ENCODE measurements at regions of chr15 and their contacts with region 1.

Region 1: DNA sequence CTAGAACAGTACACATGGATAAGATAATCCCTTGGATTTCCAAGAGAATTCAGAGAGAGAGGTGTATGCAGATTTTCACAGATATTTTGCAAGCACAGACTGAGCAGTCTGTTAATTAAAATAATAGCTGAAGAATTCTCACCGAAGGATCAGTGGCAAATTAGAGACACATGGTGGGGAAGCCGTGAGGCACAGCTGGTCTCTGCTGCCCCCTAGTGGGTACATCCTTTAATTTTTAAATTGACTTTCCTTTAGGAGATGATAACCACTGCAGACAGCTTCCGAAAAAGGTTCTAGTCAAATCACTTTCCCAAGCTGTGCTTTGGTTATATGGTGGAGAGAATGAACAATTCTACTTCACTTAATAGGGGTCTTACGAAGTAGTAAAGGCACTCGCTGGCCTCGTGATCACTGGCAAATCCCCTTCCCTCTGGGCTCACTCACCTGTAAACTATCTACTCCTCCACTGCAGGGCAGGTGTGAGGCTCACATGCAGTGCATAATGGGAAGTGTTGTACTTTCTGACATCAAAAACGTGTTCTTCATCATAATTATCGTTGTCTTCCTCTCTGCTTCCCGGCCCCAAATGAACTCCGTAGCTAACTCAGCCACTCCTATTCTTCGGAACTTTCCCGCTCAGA is 19.5 kb downstream of the MESD start:
- DNase-seq: peak; percentile 39
- ATAC-seq: peak; percentile 88
- H3K4me3 ChIP-seq: no peak overlapping the region
- H3K27ac ChIP-seq: no peak overlapping the region
- H3K4me1 ChIP-seq: peaks cover 6 to 10% of the 10 kb centered on the region in 2 experiments; a peak in 3 of 4 replicates
- H3K27me3 ChIP-seq: no peaks in the 10 kb centered on the region
- CTCF ChIP-seq: peak; percentile 65 to 89 (median 84)
- POLR2A ChIP-seq: no peak
- RAD21 ChIP-seq: peak; percentile 95

Region 2: GRCh38 chr15:80455668-80456442 is 514.3 kb before region 1 on chr15:
- CTCF ChIA-PET with region 1: interaction called, 6 read pairs
- POLR2A ChIA-PET with region 1: no interaction called
- RAD21 ChIA-PET with region 1: no interaction called
- intact Hi-C with region 1: loop called (anchors 2 kb)
- DNase-seq: peak; percentile 44
- ATAC-seq: peak; percentile 89
- H3K4me3 ChIP-seq: no peak overlapping the region
- H3K27ac ChIP-seq: no peak overlapping the region
- H3K4me1 ChIP-seq: peaks cover 4 to 8% of the 10 kb centered on the region in 2 experiments; a peak in 3 of 4 replicates
- H3K27me3 ChIP-seq: no peaks in the 10 kb centered on the region
- CTCF ChIP-seq: peak; percentile 88 to 95 (median 89)
- POLR2A ChIP-seq: no peak
- RAD21 ChIP-seq: peak; percentile 94

Region 3: DNA sequence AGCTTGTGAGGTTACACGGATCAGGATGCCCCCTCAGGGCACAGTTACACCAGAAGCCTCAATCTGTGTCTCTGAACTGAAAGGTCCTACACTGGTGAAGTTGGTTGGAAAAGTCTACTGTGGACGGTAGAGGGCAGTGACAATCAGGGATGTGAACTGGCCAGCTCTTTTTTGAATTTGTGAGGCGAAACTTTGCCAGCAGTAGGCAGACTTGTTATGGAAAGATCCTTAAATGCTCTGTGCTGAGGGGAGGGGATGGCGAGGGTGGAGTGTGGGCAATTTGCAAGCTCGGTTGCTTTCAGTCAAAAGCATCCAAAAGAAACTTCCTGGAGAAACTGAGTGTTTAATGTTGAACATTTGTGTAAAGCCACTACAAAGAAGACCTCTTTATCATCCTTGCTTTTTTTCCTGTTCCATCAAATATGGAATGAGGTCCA is 402.4 kb before region 1 on chr15:
- CTCF ChIA-PET with region 1: interaction called, 12 read pairs
- POLR2A ChIA-PET with region 1: no interaction called
- RAD21 ChIA-PET with region 1: interaction called, 3 to 7 read pairs
- intact Hi-C with region 1: loop called (anchors 1 kb)
- DNase-seq: peak; percentile 72
- ATAC-seq: peak; percentile 97
- H3K4me3 ChIP-seq: no peak overlapping the region
- H3K27ac ChIP-seq: no peak overlapping the region
- H3K4me1 ChIP-seq: no peaks in the 10 kb centered on the region
- H3K27me3 ChIP-seq: no peaks in the 10 kb centered on the region
- CTCF ChIP-seq: peak; percentile 75 to 99 (median 88)
- POLR2A ChIP-seq: no peak
- RAD21 ChIP-seq: peak; percentile 96

Region 4: GRCh38 chr15:80695104-80695910 is 274.8 kb before region 1 on chr15 and contains the start of gene ABHD17C:
- CTCF ChIA-PET with region 1: no interaction called
- POLR2A ChIA-PET with region 1: no interaction called
- RAD21 ChIA-PET with region 1: interaction called in 1 of 2 experiments, 3 read pairs
- intact Hi-C with region 1: loop called (anchors 5 kb)
- DNase-seq: no peak
- ATAC-seq: peak; percentile 80
- H3K4me3 ChIP-seq: peak within 1 kb of the TSS; percentile 79 to 81
- H3K27ac ChIP-seq: peak within 1 kb of the TSS; percentile 81
- H3K4me1 ChIP-seq: peaks cover 5 to 20% of the 10 kb centered on the region in 2 experiments; a peak in 3 of 4 replicates
- H3K27me3 ChIP-seq: no peaks in the 10 kb centered on the region
- CTCF ChIP-seq: no peak
- POLR2A ChIP-seq: no peak
- RAD21 ChIP-seq: no peak
- total RNA-seq, gene ABHD17C: 27.9 TPM

Region 5: GRCh38 chr15:80787316-80787715 is 182.8 kb before region 1 on chr15:
- CTCF ChIA-PET with region 1: interaction called, 4 read pairs
- POLR2A ChIA-PET with region 1: no interaction called
- RAD21 ChIA-PET with region 1: no interaction called
- intact Hi-C with region 1: loop called (anchors 1 kb)
- DNase-seq: no peak
- ATAC-seq: no peak
- H3K4me3 ChIP-seq: no peak overlapping the region
- H3K27ac ChIP-seq: no peak overlapping the region
- H3K4me1 ChIP-seq: no peaks in the 10 kb centered on the region
- H3K27me3 ChIP-seq: no peaks in the 10 kb centered on the region
- CTCF ChIP-seq: no peak
- POLR2A ChIP-seq: no peak
- RAD21 ChIP-seq: no peak

Region 6: DNA sequence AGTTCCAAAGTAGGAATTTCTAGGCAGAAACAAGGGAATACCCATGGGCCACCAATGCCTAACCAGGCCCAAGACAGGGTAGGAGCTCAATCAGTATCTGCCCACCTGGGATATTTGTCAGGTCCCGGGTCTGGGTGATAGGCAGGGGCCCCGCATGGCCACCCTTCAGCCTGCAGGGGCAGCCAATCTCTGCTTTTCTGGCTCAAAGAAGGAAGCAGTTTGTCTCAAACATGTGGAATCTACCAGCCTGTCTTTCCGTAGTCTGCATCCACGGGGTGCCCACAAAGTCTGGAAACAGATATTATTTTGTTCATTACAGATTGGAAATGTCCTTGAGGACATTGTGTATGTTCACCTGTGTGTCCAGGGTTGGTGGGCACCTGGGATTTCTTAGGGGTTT is 134.8 kb before region 1 on chr15:
- CTCF ChIA-PET with region 1: interaction called, 5 read pairs
- POLR2A ChIA-PET with region 1: no interaction called
- RAD21 ChIA-PET with region 1: no interaction called
- intact Hi-C with region 1: loop called (anchors 2 kb)
- DNase-seq: no peak
- ATAC-seq: peak; percentile 89
- H3K4me3 ChIP-seq: no peak overlapping the region
- H3K27ac ChIP-seq: no peak overlapping the region
- H3K4me1 ChIP-seq: peaks cover 16 to 31% of the 10 kb centered on the region in 2 experiments
- H3K27me3 ChIP-seq: no peaks in the 10 kb centered on the region
- CTCF ChIP-seq: peak; percentile 13 to 56 (median 48); a peak in 5 of 6 replicates
- POLR2A ChIP-seq: no peak
- RAD21 ChIP-seq: peak; percentile 55